PC-3 (cell line): ENCODE measurements at regions of chr5 and their contacts with region 1.

Region 1: GRCh38 chr5:133610489-133611356 is 1.6 kb downstream of the FSTL4 start:
- DNase-seq: peak; percentile 72
- ATAC-seq: peak; percentile 90
- H3K4me3 ChIP-seq: peak overlapping the region; percentile 73
- H3K27ac ChIP-seq: no peak overlapping the region
- H3K4me1 ChIP-seq: no peaks in the 10 kb centered on the region
- H3K27me3 ChIP-seq: no peaks in the 10 kb centered on the region
- CTCF ChIP-seq: peak; percentile 53

Region 2: DNA sequence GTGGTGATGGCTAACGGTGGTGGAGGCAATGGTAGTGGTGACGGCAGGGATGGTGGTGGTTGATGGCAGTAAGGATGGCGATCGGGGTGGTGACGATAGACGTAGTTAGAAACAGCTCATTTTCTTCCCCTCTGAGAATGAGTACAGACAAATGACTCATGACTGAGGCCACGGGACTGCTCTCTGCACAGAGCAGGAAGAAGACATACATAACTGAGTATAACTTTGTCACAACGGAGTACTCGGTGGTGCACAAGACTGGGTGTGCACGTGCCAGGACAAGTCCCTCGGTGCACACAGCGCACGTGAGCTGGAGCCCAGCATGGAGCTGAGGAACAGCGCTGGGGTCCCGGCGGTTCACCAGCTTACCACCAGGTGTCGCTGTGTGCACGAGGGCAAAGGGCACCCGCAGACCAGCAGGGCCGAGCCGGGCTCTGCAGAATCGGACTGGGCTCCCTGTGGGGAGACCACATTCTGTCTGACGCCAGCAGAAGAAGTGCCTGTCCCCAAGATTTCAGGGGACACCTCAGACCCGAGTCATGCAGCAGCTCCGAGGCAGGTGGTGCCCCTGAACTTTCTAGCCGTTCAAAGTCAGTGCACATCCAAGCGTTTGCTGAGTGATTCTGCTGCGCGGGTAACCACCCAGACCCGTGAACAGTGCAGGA is 187.0 kb before region 1 on chr5:
- CTCF ChIA-PET with region 1: no interaction called
- POLR2A ChIA-PET with region 1: no interaction called
- intact Hi-C with region 1: loop called (anchors 2 kb)
- DNase-seq: peak; percentile 48
- ATAC-seq: peak; percentile 88
- H3K4me3 ChIP-seq: no peak overlapping the region
- H3K27ac ChIP-seq: no peak overlapping the region
- H3K4me1 ChIP-seq: no peaks in the 10 kb centered on the region
- H3K27me3 ChIP-seq: no peaks in the 10 kb centered on the region
- CTCF ChIP-seq: peak; percentile 84

Region 3: DNA sequence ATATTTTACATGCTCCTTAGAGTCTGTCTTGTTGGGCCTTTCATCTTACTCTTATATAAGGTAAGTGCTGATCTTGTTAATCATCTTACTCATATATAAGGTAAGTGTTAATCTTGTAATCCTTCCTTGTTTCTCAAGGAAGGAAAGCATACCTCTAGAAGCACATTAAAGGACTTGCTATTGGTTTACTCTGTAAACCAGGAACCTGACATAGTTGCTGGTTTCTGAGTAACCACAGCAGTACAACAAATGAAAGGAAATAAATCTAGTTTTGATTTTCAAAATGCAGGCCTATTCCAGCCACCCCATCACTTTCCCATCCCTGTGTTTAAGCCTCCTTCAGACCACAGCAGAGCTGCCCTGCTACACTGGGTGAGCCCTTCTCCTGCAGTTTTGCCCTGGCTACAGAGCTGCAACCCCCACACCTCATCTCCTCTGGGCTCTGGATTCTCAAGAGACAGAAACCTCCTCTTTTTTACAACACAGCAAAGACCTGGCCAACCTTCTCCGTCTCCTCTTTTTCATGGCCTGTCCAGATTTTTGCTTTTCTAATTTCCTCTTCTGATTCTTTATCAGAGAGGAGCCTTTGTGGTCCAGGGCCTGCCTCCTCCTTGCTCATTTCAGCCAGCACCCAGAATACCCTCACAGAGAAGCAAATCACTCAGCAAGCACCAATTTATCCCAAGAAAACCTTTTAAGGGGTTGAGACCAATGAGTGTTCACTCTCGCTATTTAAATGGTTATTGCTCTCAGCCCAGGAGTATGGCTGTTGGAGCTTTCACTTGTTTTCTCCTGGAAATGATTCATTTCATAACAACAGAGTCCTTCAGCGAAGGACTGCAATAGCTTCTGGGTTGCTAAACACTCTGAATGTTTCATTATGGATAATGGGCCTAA is 101.6 kb before region 1 on chr5:
- CTCF ChIA-PET with region 1: no interaction called
- POLR2A ChIA-PET with region 1: no interaction called
- intact Hi-C with region 1: loop called (anchors 5 kb)
- DNase-seq: no peak
- ATAC-seq: no peak
- H3K4me3 ChIP-seq: no peak overlapping the region
- H3K27ac ChIP-seq: no peak overlapping the region
- H3K4me1 ChIP-seq: peaks cover 8% of the 10 kb centered on the region
- H3K27me3 ChIP-seq: no peaks in the 10 kb centered on the region
- CTCF ChIP-seq: no peak